Mammary epithelial cell (primary cell): ENCODE measurements at regions of chr15 and their contacts with region 1.

Region 1: GRCh38 chr15:34209421-34210282 is at the start of gene KATNBL1:
- DNase-seq: peak; percentile 92
- H3K4me3 ChIP-seq: peak within 1 kb of the TSS; percentile 79 to 98 (median 87)
- H3K27ac ChIP-seq: peak within 1 kb of the TSS; percentile 89
- H3K4me1 ChIP-seq: peaks cover 23% of the 10 kb centered on the region
- H3K27me3 ChIP-seq: no peaks in the 10 kb centered on the region
- CTCF ChIP-seq: peak; percentile 81 to 93
- total RNA-seq, gene KATNBL1: 50.7 to 55.8 TPM

Region 2: DNA sequence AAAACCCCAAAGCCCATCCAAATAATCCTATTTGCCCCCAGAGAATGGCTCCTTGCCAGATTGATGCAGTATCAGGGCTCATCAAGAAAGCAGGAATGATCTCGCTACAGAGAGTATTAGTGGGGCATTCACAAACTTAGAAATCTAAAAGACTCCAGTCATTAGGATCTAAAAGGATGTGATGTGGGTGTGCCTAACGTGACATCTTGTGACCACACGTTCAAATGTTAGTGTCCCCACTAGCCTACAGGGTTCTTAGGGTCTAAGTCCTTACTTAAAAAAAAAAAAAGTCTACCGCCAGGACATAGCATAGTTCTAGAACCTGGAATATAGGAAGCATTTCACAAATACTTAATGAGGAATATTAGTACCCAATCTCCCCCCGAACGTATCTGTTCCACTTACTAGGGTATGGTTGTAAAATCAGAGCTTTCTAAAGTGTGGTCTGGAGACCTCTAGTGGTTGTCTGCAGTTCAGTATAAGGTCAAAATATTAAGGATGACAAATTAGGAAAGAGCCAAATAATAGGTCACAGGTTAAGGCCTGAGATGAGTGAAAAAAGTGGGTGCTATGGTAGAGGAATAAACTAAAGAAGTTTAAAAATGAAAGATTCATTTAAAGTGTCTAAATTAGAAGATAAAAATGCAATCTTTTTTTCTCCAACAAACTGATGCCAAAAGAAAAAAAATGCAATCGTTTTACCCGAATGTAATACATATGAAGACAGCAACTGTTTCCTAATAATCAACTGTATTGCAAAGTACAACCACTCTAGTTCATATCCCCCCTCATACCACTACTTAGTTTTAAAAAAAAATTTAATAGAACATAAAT is 245.6 kb before region 1 on chr15:
- CTCF ChIA-PET with region 1: no interaction called
- dilution Hi-C with region 1: no loop called
- in situ Hi-C with region 1: no loop called
- intact Hi-C with region 1: no loop called
- DNase-seq: peak; percentile 14
- H3K4me3 ChIP-seq: no peak overlapping the region
- H3K27ac ChIP-seq: no peak overlapping the region
- H3K4me1 ChIP-seq: no peaks in the 10 kb centered on the region
- H3K27me3 ChIP-seq: no peaks in the 10 kb centered on the region
- CTCF ChIP-seq: peak; percentile 60 to 73

Region 3: GRCh38 chr15:34056936-34057335 is 152.7 kb before region 1 on chr15:
- CTCF ChIA-PET with region 1: interaction called, 11 read pairs
- dilution Hi-C with region 1: no loop called
- in situ Hi-C with region 1: loop called in 1 of 2 experiments (anchors 10 kb)
- intact Hi-C with region 1: loop called (anchors 1 kb)
- DNase-seq: no peak
- H3K4me3 ChIP-seq: no peak overlapping the region
- H3K27ac ChIP-seq: no peak overlapping the region
- H3K4me1 ChIP-seq: peaks cover 9% of the 10 kb centered on the region
- H3K27me3 ChIP-seq: no peaks in the 10 kb centered on the region
- CTCF ChIP-seq: no peak

Region 4: DNA sequence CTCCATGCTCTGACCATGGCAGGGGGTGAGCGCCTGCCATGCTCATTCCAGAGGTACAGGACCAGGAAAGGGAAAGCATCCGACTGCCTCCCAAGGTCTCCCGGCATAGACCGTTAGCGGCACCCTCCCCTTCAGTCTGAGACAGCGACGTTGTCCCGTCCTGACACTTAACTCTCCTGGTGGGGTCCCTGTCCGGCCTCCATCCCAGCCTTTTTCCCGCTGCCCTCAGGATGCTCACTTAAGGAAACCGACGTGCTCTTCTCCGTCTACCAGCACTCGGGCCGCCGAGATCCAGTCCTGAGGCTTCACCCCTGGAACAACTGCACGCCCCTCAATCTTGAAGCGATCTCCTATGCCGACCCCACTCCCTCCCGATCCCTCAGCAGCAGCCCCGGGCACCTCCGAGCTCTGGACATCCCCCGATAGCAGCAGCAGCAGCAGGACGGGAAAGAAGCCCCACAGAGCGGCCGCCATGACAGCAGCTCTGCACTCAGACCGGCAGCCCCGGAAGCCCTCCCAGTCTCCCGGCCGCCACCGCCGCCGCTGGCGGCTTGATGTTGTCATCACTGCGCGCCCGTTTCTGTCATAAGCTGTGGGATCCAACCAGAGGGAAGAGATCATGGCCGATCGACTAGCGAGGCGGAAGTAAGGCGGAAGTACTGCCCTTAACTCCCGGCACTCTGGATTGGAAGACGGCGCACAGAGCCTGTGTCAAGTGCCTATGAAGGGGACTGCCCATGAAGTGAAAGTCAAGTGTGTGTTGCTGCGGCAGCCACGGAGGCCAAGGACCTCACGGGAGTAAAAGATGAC is 108.1 kb before region 1 on chr15 and contains the starts of genes EMC7 and PGBD4:
- CTCF ChIA-PET with region 1: no interaction called
- dilution Hi-C with region 1: no loop called
- in situ Hi-C with region 1: loop called (anchors 10 kb)
- intact Hi-C with region 1: no loop called
- DNase-seq: peak; percentile 99
- H3K4me3 ChIP-seq: peak within 1 kb of the TSS; percentile 96 to 99 (median 96)
- H3K27ac ChIP-seq: peak within 1 kb of the TSS; percentile 74
- H3K4me1 ChIP-seq: peaks cover 14% of the 10 kb centered on the region
- H3K27me3 ChIP-seq: no peaks in the 10 kb centered on the region
- CTCF ChIP-seq: no peak
- total RNA-seq, gene EMC7: 28.3 to 75.8 TPM
- total RNA-seq, gene PGBD4: 1.3 to 2.1 TPM

Region 5: GRCh38 chr15:34122771-34123183 is 86.9 kb before region 1 on chr15:
- CTCF ChIA-PET with region 1: no interaction called
- dilution Hi-C with region 1: loop called (anchors 5 kb)
- in situ Hi-C with region 1: no loop called
- intact Hi-C with region 1: loop called (anchors 2 kb)
- DNase-seq: peak; percentile 93
- H3K4me3 ChIP-seq: no peak overlapping the region
- H3K27ac ChIP-seq: no peak overlapping the region
- H3K4me1 ChIP-seq: no peaks in the 10 kb centered on the region
- H3K27me3 ChIP-seq: no peaks in the 10 kb centered on the region
- CTCF ChIP-seq: no peak

Region 6: DNA sequence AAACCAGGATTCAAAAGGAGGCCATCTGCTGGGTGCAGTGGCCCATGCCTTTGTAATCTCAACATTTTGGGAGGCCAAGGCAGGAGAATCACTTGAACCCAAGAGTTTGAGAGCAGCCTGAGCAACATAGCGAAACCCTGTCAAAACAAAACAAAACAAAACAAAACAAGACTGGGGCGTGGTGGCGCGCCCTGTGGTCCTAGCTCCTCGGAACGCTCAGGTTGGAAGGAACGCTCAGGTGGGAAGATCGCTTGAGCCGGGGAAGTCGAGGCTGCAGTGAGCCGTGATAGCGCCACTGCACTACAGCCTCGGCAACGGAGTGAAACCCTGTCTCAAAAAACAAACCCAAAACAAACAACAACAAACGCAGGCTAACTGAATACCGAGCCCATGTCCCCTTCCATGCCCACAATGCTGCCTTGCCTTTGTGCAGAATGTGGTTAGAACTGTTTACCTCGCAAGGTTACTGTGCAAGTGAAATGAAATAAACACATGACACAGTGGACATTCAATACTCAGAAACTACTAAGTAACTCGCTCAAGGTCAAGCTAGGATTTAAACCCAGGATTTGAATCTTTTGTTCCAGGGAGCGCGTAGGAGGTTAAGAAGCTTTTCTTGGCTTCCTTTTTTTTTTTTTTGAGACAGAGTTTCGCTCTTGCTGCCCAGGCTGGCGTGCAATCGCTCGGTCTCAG is 14.4 kb after region 1 on chr15:
- CTCF ChIA-PET with region 1: no interaction called
- dilution Hi-C with region 1: no loop called
- in situ Hi-C with region 1: no loop called
- intact Hi-C with region 1: loop called (anchors 1 kb)
- DNase-seq: no peak
- H3K4me3 ChIP-seq: peak overlapping the region; percentile 61 to 82 (median 74)
- H3K27ac ChIP-seq: peak overlapping the region; percentile 75
- H3K4me1 ChIP-seq: peaks cover 6% of the 10 kb centered on the region
- H3K27me3 ChIP-seq: no peaks in the 10 kb centered on the region
- CTCF ChIP-seq: no peak

Region 7: GRCh38 chr15:34587717-34588674 is 378.3 kb after region 1 on chr15:
- CTCF ChIA-PET with region 1: no interaction called
- dilution Hi-C with region 1: no loop called
- in situ Hi-C with region 1: no loop called
- intact Hi-C with region 1: loop called (anchors 5 kb)
- DNase-seq: peak; percentile 78
- H3K4me3 ChIP-seq: peak overlapping the region; percentile 5 to 60 (median 29)
- H3K27ac ChIP-seq: peak overlapping the region; percentile 22
- H3K4me1 ChIP-seq: peaks cover 8% of the 10 kb centered on the region
- H3K27me3 ChIP-seq: no peaks in the 10 kb centered on the region
- CTCF ChIP-seq: peak; percentile 71 to 75